CD4-positive, alpha-beta T cell (primary cell): ENCODE measurements at regions of chr17 and their contacts with region 1.

Region 1: GRCh38 chr17:75271233-75271954 is 363 bp upstream of the MIF4GD start:
- DNase-seq: peak; percentile 70 to 96 (median 86)
- ATAC-seq: peak; percentile 90
- H3K4me3 ChIP-seq: peak overlapping the region; percentile 95
- H3K4me3 Mint-ChIP-seq: peak overlapping the region; percentile 84
- H3K27ac ChIP-seq: peak overlapping the region; percentile 78 to 85
- H3K27ac Mint-ChIP-seq: peak overlapping the region; percentile 48
- H3K4me1 ChIP-seq: peaks cover 40% of the 10 kb centered on the region
- H3K4me1 Mint-ChIP-seq: peaks cover 21% of the 10 kb centered on the region
- H3K27me3 ChIP-seq: no peaks in the 10 kb centered on the region
- H3K27me3 Mint-ChIP-seq: no peaks in the 10 kb centered on the region
- CTCF ChIP-seq: peak; percentile 54

Region 2: DNA sequence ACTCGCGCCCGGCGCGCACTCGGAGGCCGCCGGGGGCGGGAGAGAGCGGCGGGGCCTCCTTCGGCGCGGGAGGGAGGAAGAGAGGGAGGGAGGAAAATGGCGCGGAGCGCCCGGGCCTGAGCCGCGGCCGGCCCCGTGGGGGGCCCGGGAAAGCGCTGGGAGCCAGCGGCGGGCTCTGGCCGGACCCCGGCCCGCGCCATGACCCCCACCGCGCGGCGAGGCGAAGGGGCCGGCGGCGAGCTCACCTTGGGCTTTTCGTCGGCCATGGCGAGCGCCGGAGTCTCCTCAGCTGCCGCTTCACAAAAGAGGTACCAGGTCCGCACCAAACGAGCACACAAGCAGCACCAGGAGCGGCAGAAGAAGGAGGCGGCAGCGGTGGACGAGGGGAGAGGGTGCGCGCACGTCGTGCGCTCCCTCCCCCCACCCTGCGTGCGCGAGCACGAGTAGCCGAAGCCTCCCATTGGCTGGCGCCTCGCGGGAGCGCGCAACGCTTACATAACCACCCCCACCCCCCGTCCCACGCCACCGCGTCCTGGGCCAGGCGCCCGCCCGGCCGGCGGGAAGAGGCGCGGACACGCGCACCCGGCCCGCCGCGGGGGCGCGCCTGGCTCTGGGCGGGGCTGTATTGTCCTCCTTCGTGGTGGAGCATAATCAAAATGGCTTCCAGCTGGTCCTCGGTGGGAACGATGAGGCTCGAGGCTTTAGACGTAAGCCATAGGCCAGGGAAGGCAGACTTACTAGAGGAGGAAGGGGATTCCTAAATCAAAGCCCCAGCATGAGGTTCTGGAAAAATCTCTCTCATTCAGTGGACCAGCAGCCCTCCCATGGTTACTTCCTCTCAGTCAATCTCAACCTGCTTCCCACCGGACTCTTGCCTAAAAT is 88.6 kb before region 1 on chr17 and contains the start of gene SUMO2:
- CTCF ChIA-PET with region 1: interaction called, 7 read pairs
- POLR2A ChIA-PET with region 1: interaction called, 21 read pairs
- intact Hi-C with region 1: loop called in 1 of 2 experiments (anchors 2 kb)
- DNase-seq: peak; percentile 92 to 98 (median 96)
- ATAC-seq: peak; percentile 79
- H3K4me3 ChIP-seq: peak within 1 kb of the TSS; percentile 96
- H3K4me3 Mint-ChIP-seq: peak within 1 kb of the TSS; percentile 92
- H3K27ac ChIP-seq: peak within 1 kb of the TSS; percentile 74 to 94
- H3K27ac Mint-ChIP-seq: peak within 1 kb of the TSS; percentile 87
- H3K4me1 ChIP-seq: peaks cover 40% of the 10 kb centered on the region
- H3K4me1 Mint-ChIP-seq: peaks cover 47% of the 10 kb centered on the region
- H3K27me3 ChIP-seq: no peaks in the 10 kb centered on the region
- H3K27me3 Mint-ChIP-seq: no peaks in the 10 kb centered on the region
- CTCF ChIP-seq: peak; percentile 25
- total RNA-seq, gene SUMO2: 207 to 228 TPM

Region 3: DNA sequence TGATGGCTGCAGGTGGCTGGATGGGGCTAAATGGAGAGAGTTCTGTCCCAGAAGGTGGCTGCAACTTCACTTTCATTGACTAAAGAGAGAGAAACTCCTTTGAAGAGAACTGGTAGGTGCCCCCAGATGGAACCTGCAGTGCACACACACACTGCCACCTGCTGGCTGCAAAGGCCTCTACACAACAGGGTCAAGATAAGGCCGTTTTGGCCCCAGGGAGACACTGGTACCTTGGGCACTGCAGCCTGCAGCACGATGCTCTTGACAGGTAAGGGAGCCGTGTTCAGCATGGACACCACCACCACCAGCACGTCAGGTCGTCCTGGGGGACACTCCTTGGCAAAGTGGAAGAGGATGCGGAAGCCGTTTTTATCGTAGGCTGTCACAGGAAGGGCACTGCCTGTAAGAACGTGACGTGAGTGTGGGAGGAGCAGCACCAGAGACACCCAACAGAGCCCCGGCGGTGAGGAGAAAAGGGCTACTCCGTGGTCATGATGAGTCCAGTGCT is 32.7 kb before region 1 on chr17:
- CTCF ChIA-PET with region 1: interaction called, 25 read pairs
- POLR2A ChIA-PET with region 1: no interaction called
- intact Hi-C with region 1: no loop called
- DNase-seq: peak; percentile 45 to 82 (median 54)
- ATAC-seq: peak; percentile 52
- H3K4me3 ChIP-seq: no peak overlapping the region
- H3K4me3 Mint-ChIP-seq: peak overlapping the region; percentile 12
- H3K27ac ChIP-seq: peak overlapping the region in 1 of 2 donors; percentile 26
- H3K27ac Mint-ChIP-seq: peak overlapping the region; percentile 68
- H3K4me1 ChIP-seq: peaks cover 47% of the 10 kb centered on the region
- H3K4me1 Mint-ChIP-seq: peaks cover 18% of the 10 kb centered on the region
- H3K27me3 ChIP-seq: no peaks in the 10 kb centered on the region
- H3K27me3 Mint-ChIP-seq: no peaks in the 10 kb centered on the region
- CTCF ChIP-seq: peak; percentile 71

Region 4: DNA sequence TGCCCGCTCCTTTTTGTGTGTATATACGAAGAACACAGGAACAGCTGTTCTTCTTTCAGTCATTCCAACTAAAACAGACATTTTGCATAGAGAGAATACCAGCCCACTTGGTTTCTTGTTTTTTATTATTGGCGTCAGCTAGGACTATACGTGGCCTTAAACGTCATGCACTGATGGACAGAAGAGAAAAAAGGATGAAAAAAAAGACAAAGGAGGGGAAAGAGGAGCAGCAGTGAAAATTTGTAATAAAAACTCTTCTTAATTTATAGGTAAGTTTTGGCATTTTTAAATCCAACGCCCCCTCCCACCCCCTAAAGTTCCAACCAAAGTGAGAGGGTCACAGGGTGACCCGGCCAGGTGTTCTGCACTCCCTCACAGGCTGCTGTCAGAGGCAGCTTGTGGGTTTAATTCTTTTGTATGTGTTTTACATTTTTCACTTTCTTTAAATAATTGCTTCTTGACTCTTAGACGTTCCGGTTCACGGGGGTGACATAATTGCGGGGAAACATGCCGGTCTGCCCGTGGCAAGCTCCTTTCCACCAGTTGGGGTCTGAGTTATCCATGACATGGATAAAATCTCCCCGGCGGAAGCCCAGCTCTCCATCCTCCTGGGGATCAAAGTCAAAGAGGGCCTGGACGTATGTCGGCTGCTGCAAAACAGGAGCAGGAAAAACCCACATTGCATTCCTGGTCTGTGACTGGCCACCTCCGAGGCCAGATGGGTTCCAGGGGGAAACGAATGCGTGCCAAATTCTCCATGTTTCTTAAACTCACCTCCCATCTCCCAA is 48.7 kb after region 1 on chr17:
- CTCF ChIA-PET with region 1: interaction called, 13 read pairs
- POLR2A ChIA-PET with region 1: no interaction called
- intact Hi-C with region 1: no loop called
- DNase-seq: no peak
- ATAC-seq: no peak
- H3K4me3 ChIP-seq: no peak overlapping the region
- H3K4me3 Mint-ChIP-seq: no peak overlapping the region
- H3K27ac ChIP-seq: no peak overlapping the region
- H3K27ac Mint-ChIP-seq: no peak overlapping the region
- H3K4me1 ChIP-seq: peaks cover 11% of the 10 kb centered on the region
- H3K4me1 Mint-ChIP-seq: peaks cover 9% of the 10 kb centered on the region
- H3K27me3 ChIP-seq: no peaks in the 10 kb centered on the region
- H3K27me3 Mint-ChIP-seq: no peaks in the 10 kb centered on the region
- CTCF ChIP-seq: no peak

Region 5: DNA sequence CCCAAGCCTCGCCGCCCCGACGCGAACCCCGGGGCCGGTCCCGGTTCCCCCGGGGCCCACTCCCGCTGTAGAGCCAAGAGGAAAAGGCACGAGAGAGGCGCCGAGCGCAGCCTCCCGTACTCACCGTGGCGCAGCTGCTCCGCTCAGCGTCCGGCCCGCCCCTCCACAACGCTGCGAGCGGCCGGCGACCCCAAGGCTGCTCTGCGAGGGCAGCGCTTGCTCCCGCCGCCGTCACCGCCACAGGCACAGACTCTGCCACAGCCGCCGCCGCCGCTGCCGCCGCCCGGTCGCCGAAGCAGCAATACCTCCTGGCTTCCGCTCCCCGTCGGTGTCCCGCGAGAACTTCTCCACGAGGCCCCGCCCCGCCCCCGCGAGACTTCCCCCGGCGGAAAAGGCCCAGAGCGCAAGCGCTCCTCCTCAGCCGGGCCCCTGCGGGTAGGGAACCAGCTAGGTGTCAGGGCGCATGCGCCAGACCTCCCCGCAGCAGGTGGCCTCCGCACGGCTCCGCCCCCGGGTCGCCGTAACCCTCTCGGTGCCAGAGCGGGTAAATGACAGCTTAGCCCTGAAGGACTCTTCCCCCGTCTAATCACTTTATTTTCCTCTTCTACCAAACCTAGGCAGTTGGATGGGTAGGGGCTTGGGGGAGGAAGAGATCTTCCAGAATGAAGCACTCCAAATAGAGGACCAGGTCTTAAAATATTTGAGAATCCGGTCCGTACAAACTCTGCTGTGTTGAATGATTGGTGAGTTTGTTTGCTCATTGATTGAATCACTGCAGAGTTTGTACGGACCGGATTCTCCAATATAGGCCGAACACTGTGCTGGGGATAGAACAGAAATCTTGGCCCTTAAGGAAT is 134.2 kb after region 1 on chr17 and contains the start of gene GRB2:
- CTCF ChIA-PET with region 1: interaction called, 12 read pairs
- POLR2A ChIA-PET with region 1: interaction called, 18 read pairs
- intact Hi-C with region 1: no loop called
- DNase-seq: peak; percentile 99 to 100 (median 99)
- ATAC-seq: peak; percentile 79
- H3K4me3 ChIP-seq: peak within 1 kb of the TSS; percentile 100
- H3K4me3 Mint-ChIP-seq: peak within 1 kb of the TSS; percentile 99
- H3K27ac ChIP-seq: peak within 1 kb of the TSS; percentile 86 to 89
- H3K27ac Mint-ChIP-seq: peak within 1 kb of the TSS; percentile 87
- H3K4me1 ChIP-seq: peaks cover 33% of the 10 kb centered on the region
- H3K4me1 Mint-ChIP-seq: peaks cover 45% of the 10 kb centered on the region
- H3K27me3 ChIP-seq: no peaks in the 10 kb centered on the region
- H3K27me3 Mint-ChIP-seq: no peaks in the 10 kb centered on the region
- CTCF ChIP-seq: no peak
- total RNA-seq, gene GRB2: 88.8 to 92.6 TPM

Region 6: DNA sequence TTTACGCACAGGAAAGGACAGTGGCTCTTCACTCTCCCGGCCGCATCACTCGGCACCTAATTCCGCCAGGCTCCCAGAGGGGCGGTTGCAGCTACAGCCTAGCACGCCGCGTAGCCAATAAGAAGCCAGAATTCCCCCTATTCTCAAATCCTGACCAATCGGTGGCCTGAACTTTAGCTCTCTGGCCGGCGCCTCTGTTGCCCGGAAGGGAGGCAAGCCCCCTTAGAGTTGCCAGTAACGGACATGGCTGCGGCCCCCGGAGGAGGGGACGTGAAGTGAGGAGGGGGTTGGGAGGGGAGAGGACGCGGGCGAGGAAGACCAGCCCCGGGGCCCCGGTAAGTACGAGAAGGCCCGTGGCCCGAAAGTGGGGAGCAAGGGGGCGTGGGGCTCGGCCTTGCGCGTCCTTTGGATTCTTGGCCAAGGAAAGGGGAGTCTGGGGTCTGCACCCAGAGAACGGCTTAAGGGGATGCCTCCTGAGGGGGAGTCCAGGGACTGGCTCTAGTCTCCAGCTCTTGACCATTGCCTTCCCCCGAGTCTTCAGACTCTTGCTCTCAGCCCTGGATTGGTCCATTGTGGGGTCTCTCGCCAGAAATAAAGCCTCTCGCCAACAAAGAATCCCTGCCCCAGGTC is 185.1 kb after region 1 on chr17 and contains the start of gene TMEM94:
- CTCF ChIA-PET with region 1: interaction called, 5 read pairs
- POLR2A ChIA-PET with region 1: interaction called, 12 read pairs
- intact Hi-C with region 1: no loop called
- DNase-seq: peak; percentile 79 to 97 (median 88)
- ATAC-seq: peak; percentile 96
- H3K4me3 ChIP-seq: peak within 1 kb of the TSS; percentile 70
- H3K4me3 Mint-ChIP-seq: peak within 1 kb of the TSS; percentile 100
- H3K27ac ChIP-seq: peak within 1 kb of the TSS; percentile 23 to 59
- H3K27ac Mint-ChIP-seq: peak within 1 kb of the TSS; percentile 91
- H3K4me1 ChIP-seq: peaks cover 17% of the 10 kb centered on the region
- H3K4me1 Mint-ChIP-seq: peaks cover 29% of the 10 kb centered on the region
- H3K27me3 ChIP-seq: no peaks in the 10 kb centered on the region
- H3K27me3 Mint-ChIP-seq: no peaks in the 10 kb centered on the region
- CTCF ChIP-seq: no peak
- total RNA-seq, gene TMEM94: 52.8 to 57.3 TPM